ENCODE measurements at regions of chr11 and their contacts with region 1.

Region 1: DNA sequence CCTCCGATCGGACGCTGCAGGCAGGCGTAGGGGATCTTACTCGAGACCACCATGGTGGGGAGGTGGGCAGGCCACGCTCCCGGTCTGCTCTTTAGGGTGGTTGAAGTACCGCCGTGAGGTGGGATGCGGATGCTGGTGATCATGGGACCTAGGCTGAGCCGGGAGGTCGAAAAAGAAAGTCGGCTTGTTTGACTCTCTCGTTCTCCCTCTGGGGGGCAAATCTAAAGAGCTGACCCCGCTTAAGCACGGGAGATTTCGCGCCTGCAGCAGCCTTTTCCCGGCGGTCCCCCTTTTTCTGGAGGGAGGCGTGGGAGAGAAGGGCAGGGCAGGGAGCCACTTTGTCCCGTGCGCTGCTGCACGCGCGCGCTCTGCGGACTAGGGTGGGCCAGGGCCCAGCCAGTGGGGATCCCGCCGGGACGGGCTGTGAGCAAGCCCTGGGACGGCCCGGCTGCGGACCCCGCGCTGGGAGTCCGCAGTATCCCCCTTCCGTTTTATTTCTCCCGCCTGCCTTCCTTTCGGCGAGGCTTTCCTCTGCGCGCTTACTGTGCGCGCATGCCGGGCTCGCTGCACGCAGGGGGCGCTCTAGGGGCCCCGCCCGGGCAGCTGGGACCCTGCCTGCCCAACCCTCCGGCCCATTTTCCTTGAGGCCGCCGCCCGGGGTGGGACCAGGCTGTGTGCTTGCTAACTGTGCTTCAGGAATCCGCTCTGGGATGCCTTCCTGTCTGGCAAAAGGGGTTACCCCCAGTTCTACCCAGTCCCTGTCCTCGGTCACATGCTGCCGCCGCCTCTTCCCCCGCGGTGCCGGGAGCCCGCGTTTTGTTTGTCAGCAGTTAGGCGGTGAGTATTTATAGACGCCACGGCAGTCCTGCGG is 81.0 kb downstream of the PRR5L start:
- DNase-seq: peak; percentile 28
- ATAC-seq: peak; percentile 81
- H3K4me3 ChIP-seq: peak overlapping the region; percentile 83
- H3K27ac ChIP-seq: peak overlapping the region; percentile 16; the same call in 1 of the 2 replicates
- H3K4me1 ChIP-seq: peaks cover 3% of the 10 kb centered on the region
- H3K27me3 ChIP-seq: peaks cover 2% of the 10 kb centered on the region; the same call in 1 of the 2 replicates
- CTCF ChIP-seq: peak; percentile 60
- POLR2A ChIP-seq: peak; percentile 67
- RAD21 ChIP-seq: peak; percentile 49

Region 2: DNA sequence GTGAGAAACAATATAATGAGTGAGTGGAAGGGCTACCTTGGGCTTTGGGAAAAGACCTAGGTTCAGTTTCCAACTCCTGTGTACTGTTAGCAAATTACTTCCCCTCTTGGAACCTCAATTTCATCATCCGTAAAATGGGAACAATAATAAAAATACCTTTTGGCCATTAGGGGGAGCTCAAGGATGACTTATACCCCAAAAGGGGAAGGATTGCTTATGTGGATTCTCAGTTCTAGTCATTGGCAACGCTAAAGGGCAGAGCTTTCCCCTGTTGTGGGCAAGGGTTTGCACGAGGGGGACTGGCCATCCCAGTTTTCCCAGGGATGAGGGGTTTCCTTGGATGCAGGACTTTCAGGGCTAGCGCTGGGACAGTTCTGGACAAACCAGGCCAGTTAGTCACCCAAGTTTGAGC is 84.8 kb before region 1 on chr11:
- CTCF ChIA-PET with region 1: interaction called, 3 read pairs
- POLR2A ChIA-PET with region 1: no interaction called
- dilution Hi-C with region 1: no loop called
- in situ Hi-C with region 1: no loop called
- intact Hi-C with region 1: loop called (anchors 5 kb)
- DNase-seq: peak; percentile 47
- ATAC-seq: peak; percentile 47; the same call in 1 of the 2 replicates
- H3K4me3 ChIP-seq: no peak overlapping the region
- H3K27ac ChIP-seq: no peak overlapping the region
- H3K4me1 ChIP-seq: 0 out of 2 replicates have a peak, but pooled peaks cover 2% of the 10 kb centered on the region
- H3K27me3 ChIP-seq: no peaks in the 10 kb centered on the region
- CTCF ChIP-seq: peak; percentile 78
- POLR2A ChIP-seq: no peak
- RAD21 ChIP-seq: peak; percentile 87

Region 3: DNA sequence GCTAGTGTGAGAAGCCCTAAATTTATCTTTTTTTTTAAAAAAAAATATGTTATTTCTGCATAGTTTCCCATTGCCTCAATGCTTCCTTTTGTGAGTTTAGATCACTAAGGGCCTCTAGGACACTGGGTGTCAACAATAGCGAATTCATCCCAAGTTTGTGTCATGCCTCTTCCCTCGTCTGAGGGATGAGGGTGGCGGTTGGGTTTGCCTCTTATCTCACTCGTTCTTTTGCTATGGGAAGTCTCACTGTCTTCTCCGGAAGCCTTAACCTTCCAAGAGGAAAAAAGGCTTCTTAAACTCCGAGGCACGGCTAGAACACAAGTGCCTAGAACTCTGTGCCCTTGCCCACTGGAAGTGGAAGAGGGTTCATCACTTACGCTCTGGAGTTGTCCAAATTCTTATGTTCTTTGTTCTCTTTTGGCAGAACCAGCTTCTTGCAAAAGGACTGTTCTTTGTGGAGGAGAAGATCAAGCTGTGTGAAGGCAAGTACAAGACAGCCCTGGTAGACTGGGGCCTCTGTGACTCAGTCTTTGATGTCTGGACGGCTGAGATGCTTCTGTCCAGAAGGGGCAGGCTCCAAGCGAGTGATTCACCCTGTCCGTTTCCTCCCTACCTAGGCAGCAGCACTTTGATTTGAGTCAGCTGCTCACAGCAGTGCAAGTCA is 54.4 kb after region 1 on chr11:
- CTCF ChIA-PET with region 1: interaction called, 9 read pairs
- POLR2A ChIA-PET with region 1: no interaction called
- dilution Hi-C with region 1: no loop called
- in situ Hi-C with region 1: no loop called
- intact Hi-C with region 1: loop called (anchors 2 kb)
- DNase-seq: peak; percentile 98
- ATAC-seq: peak; percentile 100
- H3K4me3 ChIP-seq: peak overlapping the region; percentile 14; the same call in 1 of the 2 replicates
- H3K27ac ChIP-seq: peak overlapping the region; percentile 55
- H3K4me1 ChIP-seq: peaks cover 17% of the 10 kb centered on the region
- H3K27me3 ChIP-seq: no peaks in the 10 kb centered on the region
- CTCF ChIP-seq: peak; percentile 32; the same call in 1 of the 2 replicates
- POLR2A ChIP-seq: no peak
- RAD21 ChIP-seq: peak; percentile 34

Region 4: DNA sequence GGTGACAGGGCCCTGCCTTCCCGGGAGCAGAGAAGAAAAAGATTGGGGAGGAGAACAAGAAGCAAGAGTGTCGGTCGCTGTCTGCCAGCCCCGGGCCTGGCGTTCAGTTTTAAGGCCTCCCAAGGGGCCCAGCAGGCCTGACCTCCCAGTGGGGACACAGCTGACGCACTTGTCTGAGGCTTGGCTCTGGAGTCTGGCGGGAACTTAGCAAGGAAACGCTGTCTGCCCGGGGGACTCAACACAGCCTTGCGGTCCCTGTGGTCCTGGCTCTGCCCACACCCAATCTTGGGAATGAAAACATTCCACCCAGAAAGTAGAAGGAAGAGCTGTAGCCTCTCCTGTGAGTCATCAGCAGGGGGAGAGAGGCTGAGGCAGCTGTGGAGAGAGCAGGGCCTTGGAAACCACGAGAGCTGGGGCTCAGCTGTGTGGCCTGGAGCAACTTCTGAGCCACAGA is 78.6 kb after region 1 on chr11:
- CTCF ChIA-PET with region 1: interaction called, 3 read pairs
- POLR2A ChIA-PET with region 1: no interaction called
- dilution Hi-C with region 1: no loop called
- in situ Hi-C with region 1: no loop called
- intact Hi-C with region 1: loop called (anchors 5 kb)
- DNase-seq: peak; percentile 98
- ATAC-seq: peak; percentile 96
- H3K4me3 ChIP-seq: no peak overlapping the region
- H3K27ac ChIP-seq: peak overlapping the region; percentile 95
- H3K4me1 ChIP-seq: peaks cover 34% of the 10 kb centered on the region
- H3K27me3 ChIP-seq: no peaks in the 10 kb centered on the region
- CTCF ChIP-seq: no peak
- POLR2A ChIP-seq: peak; percentile 58
- RAD21 ChIP-seq: peak; percentile 38

Region 5: GRCh38 chr11:36469063-36469462 is 91.9 kb after region 1 on chr11:
- CTCF ChIA-PET with region 1: interaction called, 3 read pairs
- POLR2A ChIA-PET with region 1: no interaction called
- dilution Hi-C with region 1: no loop called
- in situ Hi-C with region 1: loop called (anchors 5 kb)
- intact Hi-C with region 1: no loop called
- DNase-seq: no peak
- ATAC-seq: no peak
- H3K4me3 ChIP-seq: no peak overlapping the region
- H3K27ac ChIP-seq: no peak overlapping the region
- H3K4me1 ChIP-seq: peaks cover 9% of the 10 kb centered on the region
- H3K27me3 ChIP-seq: no peaks in the 10 kb centered on the region
- CTCF ChIP-seq: peak; percentile 34
- POLR2A ChIP-seq: no peak
- RAD21 ChIP-seq: no peak

Measured in IMR-90 (cell line).